Endothelial cell of umbilical vein (primary cell): ENCODE measurements at regions of chr4 and their contacts with region 1.

Region 1: DNA sequence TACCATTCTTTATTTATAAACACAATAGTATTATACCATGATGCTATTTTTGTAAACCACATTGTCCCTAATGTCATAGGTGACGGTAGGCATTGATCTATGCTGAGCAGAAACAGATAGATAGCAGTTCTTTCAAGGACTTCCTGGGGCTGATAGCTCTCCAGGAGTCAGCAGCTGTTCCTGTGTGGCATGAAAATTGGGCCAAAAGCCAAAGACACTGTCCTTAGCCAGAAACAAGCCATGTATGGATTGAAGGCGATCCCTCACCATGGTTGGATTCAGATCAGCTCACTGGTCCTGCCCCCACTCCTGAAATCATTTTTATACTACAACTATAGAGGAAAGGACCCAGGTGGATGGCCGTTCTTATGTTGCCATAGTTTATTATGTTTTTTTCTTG is 53.6 kb downstream of the DDX60 start:
- DNase-seq: no peak
- H3K4me3 ChIP-seq: no peak overlapping the region
- H3K27ac ChIP-seq: no peak overlapping the region
- H3K4me1 ChIP-seq: no peaks in the 10 kb centered on the region
- H3K27me3 ChIP-seq: no peaks in the 10 kb centered on the region
- CTCF ChIP-seq: no peak
- POLR2A ChIP-seq: no peak

Region 2: GRCh38 chr4:168304744-168305459 is 40.0 kb after region 1 on chr4:
- CTCF ChIA-PET with region 1: no interaction called
- POLR2A ChIA-PET with region 1: no interaction called
- dilution Hi-C with region 1: no loop called
- intact Hi-C with region 1: loop called (anchors 1 kb)
- DNase-seq: peak; percentile 39
- H3K4me3 ChIP-seq: no peak overlapping the region
- H3K27ac ChIP-seq: no peak overlapping the region
- H3K4me1 ChIP-seq: no peaks in the 10 kb centered on the region
- H3K27me3 ChIP-seq: no peaks in the 10 kb centered on the region
- CTCF ChIP-seq: no peak
- POLR2A ChIP-seq: no peak

Region 3: DNA sequence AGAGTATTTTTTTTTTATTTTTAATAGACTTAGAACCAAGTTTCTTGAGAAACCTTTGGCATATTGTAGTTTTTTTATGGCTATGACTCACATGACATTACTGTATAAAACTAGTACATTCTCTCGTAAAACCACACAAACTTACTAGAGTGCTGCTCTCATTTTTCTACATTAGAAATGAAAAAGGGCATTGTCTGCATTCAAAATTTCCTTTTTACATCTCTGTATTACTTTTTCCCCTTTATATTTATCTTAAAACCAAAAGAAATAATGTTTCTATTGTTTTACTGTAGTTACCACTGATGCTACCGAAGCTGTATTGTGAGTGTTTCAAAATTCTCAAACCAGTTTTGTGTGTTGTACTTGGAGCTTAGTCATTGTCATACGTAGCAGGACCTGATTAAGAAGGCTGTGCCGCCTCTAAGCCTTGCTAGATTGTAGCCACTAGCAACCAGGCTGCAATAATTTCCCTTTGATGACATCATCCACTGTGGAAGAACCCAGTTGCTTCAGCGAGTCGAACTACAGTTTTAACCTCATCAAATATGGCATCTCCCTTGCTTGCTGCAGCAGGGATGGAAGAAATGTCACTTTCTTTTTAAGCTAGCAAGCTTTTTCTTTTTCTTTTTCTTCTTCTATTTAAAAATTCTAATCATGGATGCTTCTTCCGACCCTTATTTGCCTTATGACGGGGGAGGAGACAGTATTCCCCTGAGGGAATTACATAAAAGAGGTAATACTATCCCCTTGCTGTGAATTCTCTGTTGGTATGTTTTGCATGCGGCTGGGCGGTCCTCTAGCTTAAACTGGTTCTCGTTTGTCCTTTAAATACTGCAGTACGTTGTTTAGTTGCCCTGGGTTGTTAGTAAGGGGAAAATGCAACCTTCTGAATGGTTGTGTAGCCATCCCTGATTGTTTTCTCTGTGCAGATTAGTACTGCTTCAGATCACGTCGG is 1395.1 kb after region 1 on chr4:
- CTCF ChIA-PET with region 1: no interaction called
- POLR2A ChIA-PET with region 1: no interaction called
- dilution Hi-C with region 1: no loop called
- intact Hi-C with region 1: no loop called
- DNase-seq: peak; percentile 97
- H3K4me3 ChIP-seq: peak overlapping the region; percentile 37 to 77 (median 45)
- H3K27ac ChIP-seq: peak overlapping the region; percentile 94
- H3K4me1 ChIP-seq: peaks cover 52% of the 10 kb centered on the region
- H3K27me3 ChIP-seq: no peaks in the 10 kb centered on the region
- CTCF ChIP-seq: no peak
- POLR2A ChIP-seq: peak; percentile 28